ENCODE measurements at regions of chr19 and their contacts with region 1.

Region 1: GRCh38 chr19:10828981-10829821 is 6.8 kb downstream of the TMED1 start:
- DNase-seq: no peak
- H3K4me3 ChIP-seq: no peak overlapping the region
- H3K27ac ChIP-seq: no peak overlapping the region
- H3K4me1 ChIP-seq: no peaks in the 10 kb centered on the region
- H3K27me3 ChIP-seq: no peaks in the 10 kb centered on the region
- CTCF ChIP-seq: peak; percentile 31; the same call in 1 of the 2 replicates

Region 2: DNA sequence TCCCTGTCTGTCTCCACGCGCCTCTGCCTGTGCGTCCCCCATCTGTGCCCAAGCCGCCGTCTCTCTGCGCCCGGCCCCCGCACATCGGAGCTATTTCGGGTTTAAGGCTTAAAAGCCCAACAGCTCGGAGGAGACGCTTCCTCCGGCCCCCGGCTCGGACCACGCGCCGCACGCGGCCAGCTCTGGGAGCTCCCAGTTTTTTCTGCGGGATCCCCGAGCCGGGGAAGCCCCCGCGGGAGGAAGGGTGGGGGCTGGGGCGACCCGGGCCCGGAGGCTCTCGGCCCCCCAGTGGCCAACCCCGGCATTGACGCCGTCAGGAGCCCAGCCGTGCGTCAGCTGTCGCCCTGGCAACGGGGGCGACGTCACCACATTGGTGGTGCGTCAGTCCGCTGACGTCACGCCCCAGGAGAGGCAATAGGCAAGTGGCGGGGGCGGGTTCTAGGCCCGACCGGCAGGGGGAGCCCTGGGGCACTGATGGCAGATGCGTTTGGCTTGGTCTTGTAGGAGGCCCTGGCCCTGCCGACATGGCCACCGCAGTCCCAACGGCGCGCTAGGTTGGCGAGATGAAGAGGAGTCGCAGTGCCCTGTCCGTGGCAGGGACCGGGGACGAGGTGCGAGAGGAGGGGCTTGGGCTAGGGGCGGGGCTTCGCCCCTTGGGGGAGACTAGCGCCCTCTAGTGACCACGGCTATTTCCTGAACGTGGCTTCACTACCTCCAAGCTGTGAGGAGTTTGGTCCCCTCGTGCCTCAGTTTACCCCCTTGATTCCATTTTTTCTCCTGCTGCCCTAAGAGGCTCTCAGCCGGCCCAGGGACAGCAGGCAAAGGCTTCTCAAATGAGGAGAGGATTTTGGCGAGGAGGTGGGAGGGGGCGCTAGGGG is 412.6 kb before region 1 on chr19:
- CTCF ChIA-PET with region 1: no interaction called
- POLR2A ChIA-PET with region 1: no interaction called
- intact Hi-C with region 1: no loop called
- DNase-seq: peak; percentile 92
- H3K4me3 ChIP-seq: peak overlapping the region; percentile 54
- H3K27ac ChIP-seq: peak overlapping the region; percentile 77
- H3K4me1 ChIP-seq: peaks cover 27% of the 10 kb centered on the region
- H3K27me3 ChIP-seq: no peaks in the 10 kb centered on the region
- CTCF ChIP-seq: peak; percentile 86

Region 3: GRCh38 chr19:10491472-10492047 is 337.6 kb before region 1 on chr19:
- CTCF ChIA-PET with region 1: no interaction called
- POLR2A ChIA-PET with region 1: no interaction called
- intact Hi-C with region 1: no loop called
- DNase-seq: no peak
- H3K4me3 ChIP-seq: no peak overlapping the region
- H3K27ac ChIP-seq: no peak overlapping the region
- H3K4me1 ChIP-seq: no peaks in the 10 kb centered on the region
- H3K27me3 ChIP-seq: no peaks in the 10 kb centered on the region
- CTCF ChIP-seq: no peak

Region 4: DNA sequence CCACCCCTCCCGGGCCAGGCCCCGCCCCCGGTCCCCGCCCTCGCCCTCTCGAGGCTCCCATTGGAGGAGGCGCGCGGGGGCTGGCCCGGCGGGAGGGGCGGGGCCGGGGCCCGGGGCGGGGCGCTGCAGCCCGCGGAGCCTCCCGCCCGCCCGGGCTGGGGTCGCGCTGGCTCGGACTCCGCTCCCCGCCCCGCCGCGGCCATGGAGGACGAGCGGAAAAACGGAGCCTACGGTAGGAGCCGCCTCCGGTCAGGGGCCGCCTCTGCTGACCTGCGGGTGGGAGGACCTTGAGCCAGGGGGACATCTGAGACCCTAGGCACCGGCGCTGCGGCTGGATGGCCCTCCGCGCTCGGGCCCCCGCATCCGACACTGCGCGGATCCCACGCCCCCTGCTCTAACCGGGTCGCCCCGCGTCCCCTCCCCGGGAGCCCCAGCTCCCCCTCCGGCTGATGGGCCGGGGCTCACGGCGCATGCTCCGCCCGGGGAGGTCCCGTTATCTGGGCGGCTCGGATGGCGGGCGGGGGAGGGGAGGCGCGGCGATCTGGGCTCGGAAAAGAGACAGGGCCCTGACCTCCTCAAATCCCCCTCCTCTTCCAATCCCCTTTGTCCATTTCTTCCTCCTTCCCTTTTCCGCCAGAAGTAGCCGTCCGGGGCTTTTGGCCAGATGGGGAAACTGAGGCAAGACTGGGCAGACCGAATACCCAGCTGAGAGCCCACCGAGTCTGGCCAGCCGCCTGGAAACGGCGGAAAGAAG is 226.7 kb before region 1 on chr19:
- CTCF ChIA-PET with region 1: interaction called, 10 read pairs
- POLR2A ChIA-PET with region 1: no interaction called
- intact Hi-C with region 1: no loop called
- DNase-seq: peak; percentile 88
- H3K4me3 ChIP-seq: peak overlapping the region; percentile 92
- H3K27ac ChIP-seq: peak overlapping the region; percentile 79
- H3K4me1 ChIP-seq: peaks cover 2% of the 10 kb centered on the region
- H3K27me3 ChIP-seq: no peaks in the 10 kb centered on the region
- CTCF ChIP-seq: no peak

Region 5: GRCh38 chr19:10651851-10652250 is 177.3 kb before region 1 on chr19:
- CTCF ChIA-PET with region 1: no interaction called
- POLR2A ChIA-PET with region 1: no interaction called
- intact Hi-C with region 1: no loop called
- DNase-seq: no peak
- H3K4me3 ChIP-seq: no peak overlapping the region
- H3K27ac ChIP-seq: no peak overlapping the region
- H3K4me1 ChIP-seq: peaks cover 8% of the 10 kb centered on the region
- H3K27me3 ChIP-seq: no peaks in the 10 kb centered on the region
- CTCF ChIP-seq: no peak

Region 6: GRCh38 chr19:10662384-10663251 is 166.6 kb before region 1 on chr19:
- CTCF ChIA-PET with region 1: no interaction called
- POLR2A ChIA-PET with region 1: no interaction called
- intact Hi-C with region 1: no loop called
- DNase-seq: no peak
- H3K4me3 ChIP-seq: no peak overlapping the region
- H3K27ac ChIP-seq: no peak overlapping the region
- H3K4me1 ChIP-seq: peaks cover 38% of the 10 kb centered on the region
- H3K27me3 ChIP-seq: no peaks in the 10 kb centered on the region
- CTCF ChIP-seq: no peak